ENCODE measurements at regions of chr5 and their contacts with region 1.

Region 1: GRCh38 chr5:108727651-108728565 is 19.8 kb upstream of the FER start:
- DNase-seq: peak; percentile 53
- H3K4me3 Mint-ChIP-seq: peak overlapping the region; percentile 61
- H3K27ac Mint-ChIP-seq: peak overlapping the region; percentile 6
- H3K4me1 Mint-ChIP-seq: peaks cover 21% of the 10 kb centered on the region
- H3K27me3 Mint-ChIP-seq: peaks cover 42% of the 10 kb centered on the region

Region 2: GRCh38 chr5:108634617-108635288 is 93.2 kb before region 1 on chr5:
- CTCF ChIA-PET with region 1: no interaction called
- intact Hi-C with region 1: loop called (anchors 5 kb)
- DNase-seq: no peak
- H3K4me3 Mint-ChIP-seq: no peak overlapping the region
- H3K27ac Mint-ChIP-seq: no peak overlapping the region
- H3K4me1 Mint-ChIP-seq: peaks cover 7% of the 10 kb centered on the region
- H3K27me3 Mint-ChIP-seq: peaks cover 7% of the 10 kb centered on the region

Region 3: GRCh38 chr5:108911055-108911454 is 183.1 kb after region 1 on chr5:
- CTCF ChIA-PET with region 1: no interaction called
- intact Hi-C with region 1: no loop called
- DNase-seq: no peak
- H3K4me3 Mint-ChIP-seq: no peak overlapping the region
- H3K27ac Mint-ChIP-seq: no peak overlapping the region
- H3K4me1 Mint-ChIP-seq: no peaks in the 10 kb centered on the region
- H3K27me3 Mint-ChIP-seq: no peaks in the 10 kb centered on the region